ENCODE measurements at regions of chr22 and their contacts with region 1.

Region 1: GRCh38 chr22:40679964-40680818 is 907 bp downstream of the MCHR1 start:
- DNase-seq: no peak
- ATAC-seq: no peak
- H3K4me3 ChIP-seq: no peak overlapping the region
- H3K4me3 Mint-ChIP-seq: no peak overlapping the region
- H3K27ac ChIP-seq: no peak overlapping the region
- H3K27ac Mint-ChIP-seq: peak overlapping the region in 1 of 2 donors; percentile 17
- H3K4me1 ChIP-seq: peaks cover 0 to 13% of the 10 kb centered on the region in 2 experiments
- H3K4me1 Mint-ChIP-seq: peaks cover 7 to 17% (median 13%) of the 10 kb centered on the region in 3 donors
- H3K27me3 ChIP-seq: peaks cover 0 to 34% of the 10 kb centered on the region in 2 experiments
- H3K27me3 Mint-ChIP-seq: peaks cover 13 to 22% of the 10 kb centered on the region in 2 donors

Region 2: GRCh38 chr22:40626851-40627250 is 53.3 kb before region 1 on chr22:
- CTCF ChIA-PET with region 1: no interaction called
- POLR2A ChIA-PET with region 1: interaction called in 1 of 2 experiments, 10 read pairs
- DNase-seq: no peak
- ATAC-seq: no peak
- H3K4me3 ChIP-seq: no peak overlapping the region
- H3K4me3 Mint-ChIP-seq: no peak overlapping the region
- H3K27ac ChIP-seq: no peak overlapping the region
- H3K27ac Mint-ChIP-seq: no peak overlapping the region
- H3K4me1 ChIP-seq: peaks cover 2% of the 10 kb centered on the region in 2 experiments
- H3K4me1 Mint-ChIP-seq: peaks cover 48 to 56% (median 52%) of the 10 kb centered on the region in 3 donors
- H3K27me3 ChIP-seq: no peaks in the 10 kb centered on the region
- H3K27me3 Mint-ChIP-seq: no peaks in the 10 kb centered on the region

Region 3: DNA sequence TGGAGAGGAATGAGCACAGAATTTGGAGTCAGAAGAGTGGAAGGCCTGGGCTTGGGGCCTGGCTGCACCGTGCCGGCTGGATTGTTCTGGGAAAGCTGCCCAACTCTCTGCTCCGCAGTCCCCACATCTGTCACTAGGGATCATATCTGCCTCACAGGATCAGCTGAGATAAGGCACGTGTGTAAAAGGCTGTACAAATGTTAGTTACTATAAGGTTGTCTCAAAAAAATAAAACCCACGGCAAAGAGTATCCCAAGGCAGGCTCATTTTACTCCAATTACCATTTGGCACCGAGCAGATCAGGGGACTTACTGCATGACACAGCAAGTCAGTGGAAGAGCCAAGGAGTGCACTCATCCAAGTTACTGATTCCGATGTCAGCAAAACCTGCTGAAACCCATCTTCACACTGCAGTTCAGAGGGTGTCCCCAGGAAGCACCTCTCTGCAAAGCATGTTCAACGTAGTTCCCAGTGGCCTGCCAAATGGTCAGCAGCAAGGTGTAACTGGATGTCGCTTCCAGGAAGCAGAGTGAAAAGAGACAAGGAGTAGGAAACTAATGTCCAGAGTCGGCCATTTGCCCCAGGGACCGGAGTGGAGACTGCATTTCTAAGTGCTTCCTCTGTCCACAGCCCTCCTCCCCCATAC is 25.5 kb before region 1 on chr22:
- CTCF ChIA-PET with region 1: no interaction called
- POLR2A ChIA-PET with region 1: no interaction called
- DNase-seq: no peak
- ATAC-seq: no peak
- H3K4me3 ChIP-seq: no peak overlapping the region
- H3K4me3 Mint-ChIP-seq: no peak overlapping the region
- H3K27ac ChIP-seq: no peak overlapping the region
- H3K27ac Mint-ChIP-seq: no peak overlapping the region
- H3K4me1 ChIP-seq: peaks cover 0 to 7% of the 10 kb centered on the region in 2 experiments
- H3K4me1 Mint-ChIP-seq: peaks cover 0 to 5% (median 4%) of the 10 kb centered on the region in 3 donors
- H3K27me3 ChIP-seq: no peaks in the 10 kb centered on the region
- H3K27me3 Mint-ChIP-seq: no peaks in the 10 kb centered on the region

Region 4: GRCh38 chr22:40757071-40757470 is 76.9 kb after region 1 on chr22:
- CTCF ChIA-PET with region 1: interaction called, 9 to 49 read pairs
- POLR2A ChIA-PET with region 1: no interaction called
- DNase-seq: no peak
- ATAC-seq: no peak
- H3K4me3 ChIP-seq: no peak overlapping the region
- H3K4me3 Mint-ChIP-seq: no peak overlapping the region
- H3K27ac ChIP-seq: no peak overlapping the region
- H3K27ac Mint-ChIP-seq: no peak overlapping the region
- H3K4me1 ChIP-seq: no peaks in the 10 kb centered on the region
- H3K4me1 Mint-ChIP-seq: peaks cover 5 to 7% (median 7%) of the 10 kb centered on the region in 3 donors
- H3K27me3 ChIP-seq: no peaks in the 10 kb centered on the region
- H3K27me3 Mint-ChIP-seq: no peaks in the 10 kb centered on the region

Measured in T-cell (primary cell).